ENCODE measurements at regions of chr7 and their contacts with region 1.

Region 1: GRCh38 chr7:107939573-107940489 is 48.8 kb downstream of the DLD start:
- DNase-seq: peak; percentile 84 to 92 (median 85)
- ATAC-seq: peak; percentile 72 to 91
- H3K4me3 ChIP-seq: no peak overlapping the region
- H3K27ac ChIP-seq: peak overlapping the region; percentile 62
- H3K4me1 ChIP-seq: peaks cover 12% of the 10 kb centered on the region
- H3K27me3 ChIP-seq: no peaks in the 10 kb centered on the region

Region 2: DNA sequence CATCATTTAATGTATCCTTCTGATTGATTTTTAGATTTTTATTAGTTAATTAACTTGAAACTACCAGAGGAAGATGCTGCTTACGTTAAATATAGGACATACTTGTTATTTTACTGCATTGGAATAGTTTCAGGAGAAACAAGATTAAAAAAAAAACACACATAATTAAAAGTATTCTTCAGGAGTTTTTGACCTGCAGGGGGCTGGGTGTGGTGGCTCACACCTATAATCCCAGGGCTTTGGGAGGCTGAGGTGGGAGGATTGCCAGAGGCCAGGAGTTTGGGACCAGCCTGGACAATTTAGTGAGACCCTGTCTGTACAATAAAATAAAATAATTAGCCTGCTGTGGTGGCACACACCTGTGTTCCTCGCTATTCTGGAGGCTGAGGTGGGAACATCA is 185.2 kb before region 1 on chr7:
- intact Hi-C with region 1: no loop called
- DNase-seq: no peak
- ATAC-seq: no peak
- H3K4me3 ChIP-seq: no peak overlapping the region
- H3K27ac ChIP-seq: no peak overlapping the region
- H3K4me1 ChIP-seq: no peaks in the 10 kb centered on the region
- H3K27me3 ChIP-seq: no peaks in the 10 kb centered on the region

Region 3: DNA sequence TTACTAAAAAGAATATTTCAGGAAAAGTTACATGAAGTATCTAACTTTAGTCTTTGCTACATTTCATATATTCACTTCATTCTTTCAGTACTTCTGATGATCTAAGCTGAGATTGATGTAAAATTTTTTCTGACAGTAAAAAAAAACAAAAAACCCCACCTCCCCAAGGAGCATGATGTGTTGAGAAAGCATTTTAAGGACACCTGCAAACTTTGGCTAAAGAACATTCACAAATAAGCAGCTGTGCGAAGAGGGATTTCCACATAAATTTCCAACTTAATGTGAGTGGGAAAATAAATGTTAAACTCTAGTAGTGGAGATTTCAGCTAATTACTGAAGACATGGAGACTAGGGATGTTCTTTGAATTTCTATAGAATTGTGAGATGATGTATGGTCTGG is 13.3 kb before region 1 on chr7:
- intact Hi-C with region 1: loop called in 1 of 4 experiments (anchors 2 kb)
- DNase-seq: no peak
- ATAC-seq: no peak
- H3K4me3 ChIP-seq: no peak overlapping the region
- H3K27ac ChIP-seq: no peak overlapping the region
- H3K4me1 ChIP-seq: no peaks in the 10 kb centered on the region
- H3K27me3 ChIP-seq: no peaks in the 10 kb centered on the region

Region 4: DNA sequence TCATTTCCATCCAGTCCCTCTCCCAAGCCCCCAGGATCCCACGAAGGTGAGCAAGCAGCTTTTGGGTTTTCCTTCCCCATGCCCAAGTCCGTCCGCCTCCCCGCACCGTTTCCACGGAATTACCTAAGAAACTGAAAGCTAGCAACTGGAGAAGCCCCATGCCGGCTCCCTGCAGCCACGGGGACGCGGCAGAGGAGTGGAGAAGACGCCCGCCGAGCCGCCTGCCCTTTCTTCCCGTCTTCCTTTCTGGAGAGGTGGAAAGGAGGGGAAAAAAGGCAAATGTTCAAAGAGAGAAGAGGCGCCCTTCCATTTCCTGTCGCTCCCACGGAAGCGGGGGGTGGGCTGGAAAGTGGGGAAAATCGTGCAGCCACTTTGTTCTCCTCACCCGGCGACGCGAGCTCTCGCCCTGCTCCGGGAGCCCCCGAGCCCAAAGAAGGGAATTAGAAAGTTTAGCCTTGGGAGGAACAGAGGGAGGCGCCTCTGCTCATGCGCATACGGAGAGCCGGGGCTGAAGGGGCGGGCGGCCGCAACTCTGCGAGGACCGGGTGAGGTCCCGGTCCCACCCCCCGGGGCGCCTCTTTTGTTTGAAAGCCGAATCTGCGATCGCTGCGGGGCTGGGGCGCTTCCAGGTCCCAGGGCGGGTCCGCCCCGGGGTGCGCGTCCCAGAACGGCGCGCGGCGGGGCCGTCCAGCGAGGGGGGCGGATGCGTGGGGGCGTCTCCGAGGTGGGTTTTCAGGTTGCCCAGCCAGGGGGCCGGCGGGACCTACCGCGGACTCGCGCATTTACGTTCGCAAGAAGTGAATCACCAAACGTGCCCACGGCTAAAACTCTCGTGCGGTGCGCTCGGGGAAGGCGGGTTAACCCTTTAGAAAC is 63.1 kb after region 1 on chr7 and contains the start of gene LAMB1:
- intact Hi-C with region 1: loop called in 1 of 4 experiments (anchors 10 kb)
- DNase-seq: peak; percentile 87 to 93 (median 88)
- ATAC-seq: peak; percentile 84 to 86
- H3K4me3 ChIP-seq: peak within 1 kb of the TSS; percentile 90
- H3K27ac ChIP-seq: peak within 1 kb of the TSS; percentile 33
- H3K4me1 ChIP-seq: peaks cover 2% of the 10 kb centered on the region
- H3K27me3 ChIP-seq: no peaks in the 10 kb centered on the region
- total RNA-seq, gene LAMB1: 42.1 to 110 (median 47.3) TPM

Region 5: DNA sequence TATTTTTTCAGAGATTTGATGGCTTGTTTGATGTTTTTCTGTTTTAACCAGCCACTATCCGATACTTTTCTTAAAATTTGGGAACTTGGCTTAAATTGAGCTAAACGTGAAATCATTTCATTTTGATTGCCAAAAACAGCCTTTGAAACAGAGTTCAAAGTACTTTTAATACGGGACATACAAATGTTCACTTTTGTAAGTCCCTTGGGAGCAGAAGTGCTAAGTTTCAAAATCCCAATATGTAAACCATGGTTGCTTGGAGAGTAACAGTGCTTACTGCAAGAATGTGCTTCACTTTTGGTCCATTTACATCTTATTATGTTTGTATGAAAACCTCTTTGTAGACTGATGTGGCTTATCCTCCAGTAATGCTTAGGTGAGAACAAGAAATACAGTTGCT is 575.2 kb after region 1 on chr7:
- intact Hi-C with region 1: no loop called
- DNase-seq: no peak
- ATAC-seq: no peak
- H3K4me3 ChIP-seq: no peak overlapping the region
- H3K27ac ChIP-seq: no peak overlapping the region
- H3K4me1 ChIP-seq: peaks cover 3% of the 10 kb centered on the region
- H3K27me3 ChIP-seq: no peaks in the 10 kb centered on the region